B cell (primary cell): ENCODE measurements at regions of chr1 and their contacts with region 1.

Region 1: GRCh38 chr1:58739856-58740466 is 40.1 kb upstream of the MYSM1 start:
- DNase-seq: peak; percentile 75
- ATAC-seq: peak; percentile 61
- H3K4me3 ChIP-seq: no peak overlapping the region
- H3K4me3 Mint-ChIP-seq: no peak overlapping the region
- H3K27ac ChIP-seq: no peak overlapping the region
- H3K27ac Mint-ChIP-seq: no peak overlapping the region
- H3K4me1 ChIP-seq: no peaks in the 10 kb centered on the region
- H3K4me1 Mint-ChIP-seq: no peaks in the 10 kb centered on the region
- H3K27me3 ChIP-seq: no peaks in the 10 kb centered on the region
- H3K27me3 Mint-ChIP-seq: peaks cover 12% of the 10 kb centered on the region
- CTCF ChIP-seq: peak; percentile 98

Region 2: DNA sequence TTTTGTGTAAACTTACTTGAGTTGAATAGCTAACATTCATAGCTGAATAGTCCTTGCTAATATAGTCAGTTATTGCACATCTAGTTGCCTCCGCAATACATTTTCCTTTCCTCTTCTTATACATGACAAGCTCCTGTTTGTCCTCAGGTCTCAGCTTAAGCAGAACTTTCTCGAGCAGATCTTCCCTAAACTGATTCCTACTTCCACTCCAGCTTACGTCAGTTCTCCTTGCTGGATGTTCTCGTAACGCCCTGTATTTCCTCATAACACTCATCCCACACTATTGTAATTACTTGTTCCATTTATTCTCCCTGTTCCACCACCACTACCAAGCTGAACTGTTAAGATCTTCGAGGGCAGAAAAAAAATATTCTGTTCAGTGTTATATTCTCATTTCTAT is 178.3 kb before region 1 on chr1:
- CTCF ChIA-PET with region 1: no interaction called
- POLR2A ChIA-PET with region 1: no interaction called
- intact Hi-C with region 1: no loop called
- DNase-seq: no peak
- ATAC-seq: no peak
- H3K4me3 ChIP-seq: no peak overlapping the region
- H3K4me3 Mint-ChIP-seq: no peak overlapping the region
- H3K27ac ChIP-seq: no peak overlapping the region
- H3K27ac Mint-ChIP-seq: no peak overlapping the region
- H3K4me1 ChIP-seq: no peaks in the 10 kb centered on the region
- H3K4me1 Mint-ChIP-seq: no peaks in the 10 kb centered on the region
- H3K27me3 ChIP-seq: peaks cover 0 to 10% (median 4%) of the 10 kb centered on the region in 4 experiments
- H3K27me3 Mint-ChIP-seq: peaks cover 41% of the 10 kb centered on the region
- CTCF ChIP-seq: no peak

Region 3: DNA sequence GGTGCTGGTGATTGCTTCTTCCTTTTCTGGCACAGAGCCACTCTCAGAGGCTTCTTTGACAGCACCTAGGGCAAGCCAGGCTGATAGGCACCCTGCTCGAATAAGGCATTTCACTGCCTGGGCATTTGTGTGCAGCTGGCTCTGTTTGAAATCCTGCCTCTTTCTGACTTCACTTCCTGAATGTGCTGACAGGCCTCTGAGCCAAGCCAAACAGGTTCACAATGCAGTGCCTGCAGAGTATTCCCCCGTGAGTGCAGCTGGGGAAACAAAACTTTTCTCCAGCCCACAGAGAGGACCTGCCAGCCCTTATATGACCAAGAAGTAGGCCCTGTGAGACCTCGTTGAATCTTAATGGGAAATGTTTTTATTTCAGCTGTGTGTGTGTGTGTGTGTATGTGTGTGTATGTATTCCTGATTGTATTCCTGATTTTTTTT is 33.5 kb after region 1 on chr1:
- CTCF ChIA-PET with region 1: interaction called, 17 read pairs
- POLR2A ChIA-PET with region 1: interaction called, 4 read pairs
- intact Hi-C with region 1: no loop called
- DNase-seq: peak; percentile 45
- ATAC-seq: peak; percentile 83
- H3K4me3 ChIP-seq: no peak overlapping the region
- H3K4me3 Mint-ChIP-seq: peak overlapping the region; percentile 30
- H3K27ac ChIP-seq: peak overlapping the region; percentile 26 to 32
- H3K27ac Mint-ChIP-seq: peak overlapping the region; percentile 69
- H3K4me1 ChIP-seq: peaks cover 18 to 20% of the 10 kb centered on the region in 2 donors
- H3K4me1 Mint-ChIP-seq: peaks cover 23% of the 10 kb centered on the region
- H3K27me3 ChIP-seq: peaks cover 0 to 5% (median 0%) of the 10 kb centered on the region in 4 experiments
- H3K27me3 Mint-ChIP-seq: peaks cover 8% of the 10 kb centered on the region
- CTCF ChIP-seq: no peak

Region 4: GRCh38 chr1:58841455-58841854 is 101.5 kb after region 1 on chr1:
- CTCF ChIA-PET with region 1: interaction called, 4 read pairs
- POLR2A ChIA-PET with region 1: no interaction called
- intact Hi-C with region 1: loop called (anchors 2 kb)
- DNase-seq: peak; percentile 44
- ATAC-seq: peak; percentile 51
- H3K4me3 ChIP-seq: no peak overlapping the region
- H3K4me3 Mint-ChIP-seq: no peak overlapping the region
- H3K27ac ChIP-seq: no peak overlapping the region
- H3K27ac Mint-ChIP-seq: no peak overlapping the region
- H3K4me1 ChIP-seq: no peaks in the 10 kb centered on the region
- H3K4me1 Mint-ChIP-seq: peaks cover 2% of the 10 kb centered on the region
- H3K27me3 ChIP-seq: no peaks in the 10 kb centered on the region
- H3K27me3 Mint-ChIP-seq: no peaks in the 10 kb centered on the region
- CTCF ChIP-seq: peak; percentile 27